ENCODE measurements at regions of chr6 and their contacts with region 1.

Region 1: DNA sequence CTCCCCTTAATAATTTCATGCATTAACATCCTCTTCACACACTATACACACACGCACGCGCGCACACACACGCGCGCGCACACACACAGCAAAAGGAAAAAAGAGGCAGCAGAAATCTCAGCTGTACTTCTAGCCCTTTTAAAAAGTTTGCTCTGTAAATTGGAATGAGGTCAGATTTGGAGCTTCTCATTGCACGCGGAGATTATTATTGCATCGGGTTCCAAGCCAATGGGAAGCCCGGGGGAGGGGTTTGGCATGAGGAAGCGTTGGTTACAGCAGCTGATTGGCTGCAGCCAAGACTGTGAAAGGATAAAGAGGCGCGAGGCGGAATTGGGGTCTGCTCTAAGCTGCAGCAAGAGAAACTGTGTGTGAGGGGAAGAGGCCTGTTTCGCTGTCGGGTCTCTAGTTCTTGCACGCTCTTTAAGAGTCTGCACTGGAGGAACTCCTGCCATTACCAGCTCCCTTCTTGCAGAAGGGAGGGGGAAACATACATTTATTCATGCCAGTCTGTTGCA is at the start of gene SOX4:
- DNase-seq: peak; percentile 88
- H3K4me3 Mint-ChIP-seq: peak within 1 kb of the TSS; percentile 83
- H3K27ac Mint-ChIP-seq: peak within 1 kb of the TSS; percentile 85
- H3K4me1 Mint-ChIP-seq: peaks cover 21% of the 10 kb centered on the region
- H3K27me3 Mint-ChIP-seq: peaks cover 45% of the 10 kb centered on the region
- total RNA-seq, gene SOX4: 0.79 and 0.95 TPM in 2 replicates

Region 2: GRCh38 chr6:20401205-20402091 is 1192.0 kb before region 1 on chr6 and contains the start of gene E2F3:
- intact Hi-C with region 1: loop called (anchors 5 kb)
- DNase-seq: peak; percentile 100
- H3K4me3 Mint-ChIP-seq: peak within 1 kb of the TSS; percentile 94
- H3K27ac Mint-ChIP-seq: peak within 1 kb of the TSS; percentile 99
- H3K4me1 Mint-ChIP-seq: peaks cover 27% of the 10 kb centered on the region
- H3K27me3 Mint-ChIP-seq: no peaks in the 10 kb centered on the region
- total RNA-seq, gene E2F3: 27.1 and 28.0 TPM in 2 replicates

Region 3: DNA sequence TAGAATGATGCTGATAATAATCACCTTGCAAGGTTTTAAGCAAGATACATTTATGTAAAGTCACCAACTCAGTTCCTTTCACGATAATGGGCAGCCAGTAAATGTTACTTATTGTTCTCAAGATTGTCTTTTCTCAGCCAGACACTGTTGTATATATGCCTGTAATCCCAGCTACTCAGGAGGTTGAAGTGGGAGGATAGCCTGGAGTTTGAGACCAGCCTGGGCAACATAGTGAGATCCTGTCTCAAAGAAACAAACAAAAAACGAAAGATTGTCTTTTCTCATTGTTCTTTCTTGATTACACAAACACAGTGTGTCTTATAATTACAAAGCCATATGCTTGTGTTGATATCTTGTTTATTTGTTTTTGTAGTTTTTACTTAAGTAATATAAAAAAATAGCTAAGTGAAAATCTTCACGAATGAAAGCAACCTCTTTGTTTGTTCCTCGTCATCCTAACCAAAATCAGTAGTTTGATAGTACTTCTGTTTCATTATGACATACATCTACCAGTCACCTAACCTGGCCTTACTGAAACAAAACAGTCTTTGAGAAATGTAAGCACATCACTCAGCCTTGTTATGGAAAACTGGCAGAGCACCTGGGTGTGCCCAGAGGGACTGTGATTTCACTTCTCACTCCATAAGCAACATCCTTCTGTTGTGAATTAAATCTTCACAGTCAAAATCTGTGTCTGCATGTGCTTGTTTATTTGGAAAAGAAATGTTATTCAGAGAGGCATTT is 436.1 kb before region 1 on chr6:
- intact Hi-C with region 1: loop called (anchors 5 kb)
- DNase-seq: no peak
- H3K4me3 Mint-ChIP-seq: no peak overlapping the region
- H3K27ac Mint-ChIP-seq: no peak overlapping the region
- H3K4me1 Mint-ChIP-seq: peaks cover 8% of the 10 kb centered on the region
- H3K27me3 Mint-ChIP-seq: no peaks in the 10 kb centered on the region

Region 4: GRCh38 chr6:21754891-21755290 is 161.4 kb after region 1 on chr6:
- intact Hi-C with region 1: loop called (anchors 10 kb)
- DNase-seq: no peak
- H3K4me3 Mint-ChIP-seq: no peak overlapping the region
- H3K27ac Mint-ChIP-seq: no peak overlapping the region
- H3K4me1 Mint-ChIP-seq: peaks cover 2% of the 10 kb centered on the region
- H3K27me3 Mint-ChIP-seq: no peaks in the 10 kb centered on the region

Region 5: GRCh38 chr6:22068561-22069305 is 475.3 kb after region 1 on chr6:
- intact Hi-C with region 1: loop called (anchors 1 kb)
- DNase-seq: no peak
- H3K4me3 Mint-ChIP-seq: no peak overlapping the region
- H3K27ac Mint-ChIP-seq: peak overlapping the region; percentile 44
- H3K4me1 Mint-ChIP-seq: peaks cover 10% of the 10 kb centered on the region
- H3K27me3 Mint-ChIP-seq: peaks cover 2% of the 10 kb centered on the region

Region 6: DNA sequence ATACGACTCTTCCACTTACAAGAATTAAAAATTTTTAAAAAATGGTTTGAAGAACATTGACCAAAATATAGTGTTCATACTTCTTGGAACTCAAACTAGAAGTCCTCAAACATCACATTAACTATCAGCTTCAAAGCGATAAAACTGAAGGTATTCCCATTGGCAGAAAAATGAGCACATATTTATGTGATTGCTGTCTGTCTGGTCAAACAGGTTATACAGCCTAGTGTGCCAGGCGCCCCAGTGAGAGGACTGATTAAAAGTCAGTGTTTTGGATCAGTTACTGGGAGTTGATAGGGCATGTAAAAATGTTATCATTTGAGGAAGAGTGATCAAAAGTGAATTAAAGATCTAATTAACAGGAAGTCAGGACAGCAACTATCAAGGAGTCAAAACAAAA is 1714.7 kb after region 1 on chr6:
- intact Hi-C with region 1: no loop called
- DNase-seq: no peak
- H3K4me3 Mint-ChIP-seq: no peak overlapping the region
- H3K27ac Mint-ChIP-seq: no peak overlapping the region
- H3K4me1 Mint-ChIP-seq: no peaks in the 10 kb centered on the region
- H3K27me3 Mint-ChIP-seq: no peaks in the 10 kb centered on the region

Measured in activated CD4-positive, alpha-beta T cell treated with anti-CD3 and anti-CD28 coated beads, Interleukin-2, amount 10 ng/mL, durations not matched to agents 24 days and 14 days (primary cell).